Heart right ventricle (tissue), 16 donors: ENCODE measurements at regions of chr18 and their contacts with region 1.

Region 1: DNA sequence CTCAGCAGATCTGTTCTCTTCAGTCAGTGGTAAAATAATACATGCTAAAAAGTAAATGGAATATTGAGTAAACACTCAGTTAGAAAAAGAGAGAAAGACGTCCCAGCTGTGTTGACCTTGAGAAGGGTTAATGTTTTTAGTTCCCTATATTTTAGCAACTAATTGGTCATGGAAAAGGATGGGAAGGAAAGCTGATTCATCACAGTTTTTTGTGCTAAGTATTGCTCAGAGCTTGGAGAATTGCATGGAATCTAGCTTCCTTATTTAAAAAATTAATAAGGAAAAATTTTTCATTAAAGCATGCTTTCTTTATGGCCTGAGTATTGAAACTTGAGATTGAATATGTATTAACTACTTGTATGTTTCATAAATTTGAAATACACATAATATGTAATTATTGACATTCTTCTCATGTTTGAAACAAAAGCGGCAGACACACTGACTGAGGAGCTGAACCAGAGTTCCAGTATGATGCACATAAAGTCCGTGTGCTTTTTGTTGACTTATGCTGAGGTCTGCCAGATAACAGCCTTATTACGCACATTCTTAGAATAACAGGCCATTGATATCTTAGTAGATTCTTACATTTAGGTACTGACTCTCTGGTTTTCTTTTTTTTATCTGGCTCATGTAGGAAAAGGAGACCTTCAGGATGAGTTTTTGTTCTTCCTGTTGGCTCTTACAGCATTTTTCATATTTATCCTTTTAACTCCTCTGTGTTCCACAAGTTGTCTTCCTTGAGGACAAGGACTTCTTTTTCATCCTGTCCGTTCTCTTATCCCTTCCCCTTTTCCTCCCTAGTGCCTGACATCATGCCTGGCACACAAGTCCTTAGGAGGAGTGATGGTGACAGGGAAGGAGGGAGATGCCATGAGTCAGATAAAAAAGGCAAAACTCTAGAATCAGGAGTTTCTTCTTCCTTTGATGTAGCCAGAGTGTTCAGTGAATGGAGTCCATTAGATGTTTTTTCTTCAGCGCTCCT is 194.1 kb downstream of the PTPRM start:
- DNase-seq: no peak
- ATAC-seq: no peak
- H3K4me3 ChIP-seq: no peak overlapping the region
- H3K27ac ChIP-seq: peak overlapping the region in 1 of 10 donors; percentile 7
- H3K4me1 ChIP-seq: peaks cover 3 to 93% (median 66%) of the 10 kb centered on the region in 9 donors
- H3K27me3 ChIP-seq: no peaks in the 10 kb centered on the region
- CTCF ChIP-seq: no peak

Region 2: DNA sequence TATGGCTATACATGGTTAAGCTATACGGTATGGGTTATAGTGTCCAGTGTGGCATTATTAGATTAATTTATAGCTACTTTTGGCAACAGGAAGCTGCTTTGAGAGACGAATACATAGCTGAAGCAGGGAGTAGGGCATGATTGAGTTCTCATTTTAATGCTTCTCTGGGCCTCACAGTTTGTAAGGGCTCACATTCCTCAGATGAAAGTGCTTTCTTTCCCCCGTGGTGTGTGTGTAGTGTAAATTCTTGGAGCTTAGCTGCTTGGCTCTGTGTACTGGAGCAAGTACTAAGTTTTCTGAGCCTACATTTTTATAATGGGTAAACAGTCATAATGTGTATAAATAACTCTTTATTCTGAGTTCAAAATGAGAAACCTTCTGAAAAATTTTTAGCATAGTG is 20.4 kb before region 1 on chr18:
- intact Hi-C with region 1: no loop called
- DNase-seq: no peak
- ATAC-seq: peak in 3 of 8 donors; percentile 12 to 48 (median 25)
- H3K4me3 ChIP-seq: no peak overlapping the region
- H3K27ac ChIP-seq: peak overlapping the region in 9 of 10 donors; percentile 3 to 64 (median 53)
- H3K4me1 ChIP-seq: peaks cover 7 to 68% (median 51%) of the 10 kb centered on the region in 9 donors
- H3K27me3 ChIP-seq: no peaks in the 10 kb centered on the region
- CTCF ChIP-seq: no peak

Region 3: GRCh38 chr18:7822435-7823367 is 61.4 kb after region 1 on chr18:
- intact Hi-C with region 1: loop called in 2 of 10 experiments (anchors 10 kb)
- DNase-seq: peak; percentile 18 to 51
- ATAC-seq: peak; percentile 44 to 81 (median 69)
- H3K4me3 ChIP-seq: peak overlapping the region in 4 of 10 donors; percentile 1 to 14 (median 4)
- H3K27ac ChIP-seq: peak overlapping the region in 8 of 10 donors; percentile 0 to 73 (median 46)
- H3K4me1 ChIP-seq: peaks cover 7 to 84% (median 64%) of the 10 kb centered on the region in 9 donors
- H3K27me3 ChIP-seq: no peaks in the 10 kb centered on the region
- CTCF ChIP-seq: no peak